ENCODE measurements at regions of chr18 and their contacts with region 1.

Region 1: DNA sequence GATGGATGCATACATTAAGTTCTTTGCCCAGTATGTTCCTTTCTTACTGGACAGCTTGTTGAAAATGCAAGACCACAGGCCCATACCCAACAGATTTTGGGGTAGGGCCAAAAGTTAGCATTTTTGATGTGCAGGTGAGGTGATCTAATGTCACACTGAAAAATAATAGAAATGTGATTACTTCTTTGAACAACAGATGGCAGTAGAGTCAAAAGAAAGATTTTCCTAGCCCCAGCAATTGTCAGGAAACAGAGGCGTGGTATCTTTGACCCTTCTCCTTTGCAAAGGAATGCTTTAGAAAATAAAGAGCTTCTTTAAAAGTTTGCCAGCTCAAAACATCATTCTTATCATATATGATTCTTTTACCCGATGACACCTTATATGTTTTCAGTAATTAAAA is 343.6 kb upstream of the SYT4 start:
- DNase-seq: peak; percentile 5
- ATAC-seq: peak; percentile 56; the same call in 2 of the 3 replicates
- H3K4me3 ChIP-seq: no peak overlapping the region
- H3K27ac ChIP-seq: no peak overlapping the region
- H3K4me1 ChIP-seq: no peaks in the 10 kb centered on the region
- H3K27me3 ChIP-seq: no peaks in the 10 kb centered on the region
- CTCF ChIP-seq: peak; percentile 63
- EP300 ChIP-seq: no peak
- POLR2A ChIP-seq: no peak
- RAD21 ChIP-seq: 0 out of 2 replicates have a peak, but pooled peaks have one; percentile 16

Region 2: GRCh38 chr18:43634994-43635393 is 14.1 kb after region 1 on chr18:
- CTCF ChIA-PET with region 1: no interaction called
- POLR2A ChIA-PET with region 1: no interaction called
- in situ Hi-C with region 1: no loop called
- intact Hi-C with region 1: no loop called
- DNase-seq: no peak
- ATAC-seq: no peak
- H3K4me3 ChIP-seq: no peak overlapping the region
- H3K27ac ChIP-seq: no peak overlapping the region
- H3K4me1 ChIP-seq: no peaks in the 10 kb centered on the region
- H3K27me3 ChIP-seq: no peaks in the 10 kb centered on the region
- CTCF ChIP-seq: no peak
- EP300 ChIP-seq: no peak
- POLR2A ChIP-seq: no peak
- RAD21 ChIP-seq: no peak

Region 3: DNA sequence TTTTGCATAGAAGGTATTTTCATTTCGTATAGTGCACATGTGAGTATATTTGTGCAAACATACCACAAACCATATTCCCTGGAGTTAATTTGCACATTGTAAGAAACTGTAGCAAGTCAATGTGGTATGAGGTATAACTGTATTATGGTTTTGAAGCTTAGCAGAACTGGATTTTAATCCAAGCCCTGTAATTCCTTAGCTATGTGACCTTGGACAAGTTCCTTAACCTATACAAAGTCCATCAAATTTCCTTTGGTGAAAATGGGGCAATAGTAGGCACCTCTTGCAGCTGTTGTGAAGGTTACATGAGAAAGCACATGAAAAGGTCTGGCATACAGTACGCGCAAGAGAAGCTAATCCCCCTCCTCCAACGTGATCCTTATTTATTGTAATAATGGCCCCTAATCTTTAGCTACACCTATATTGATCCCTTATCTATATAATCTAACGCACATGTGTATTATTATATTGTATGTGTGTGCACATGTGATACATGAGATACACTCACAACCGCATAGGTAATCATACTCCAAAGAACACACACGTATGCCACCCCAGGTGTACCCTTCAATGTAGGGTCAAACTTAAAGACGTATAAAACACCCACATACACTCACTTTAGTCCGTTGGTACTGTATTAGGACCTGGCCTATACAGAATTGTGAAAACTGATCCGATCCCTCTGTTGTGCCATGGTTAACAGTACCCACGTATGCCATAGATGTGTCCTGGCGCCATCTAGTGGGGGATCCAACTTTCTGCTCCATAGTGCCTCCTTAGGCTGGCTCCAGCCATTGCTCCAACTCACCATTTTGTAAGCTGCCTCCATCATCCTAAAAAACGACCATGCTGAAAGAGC is 1591.5 kb after region 1 on chr18:
- CTCF ChIA-PET with region 1: interaction called, 19 read pairs
- POLR2A ChIA-PET with region 1: no interaction called
- in situ Hi-C with region 1: loop called (anchors 25 kb)
- intact Hi-C with region 1: no loop called
- DNase-seq: peak; percentile 59
- ATAC-seq: peak; percentile 100
- H3K4me3 ChIP-seq: no peak overlapping the region
- H3K27ac ChIP-seq: no peak overlapping the region
- H3K4me1 ChIP-seq: no peaks in the 10 kb centered on the region
- H3K27me3 ChIP-seq: no peaks in the 10 kb centered on the region; a peak in 1 of 5 replicates
- CTCF ChIP-seq: peak; percentile 90
- EP300 ChIP-seq: no peak
- POLR2A ChIP-seq: no peak
- RAD21 ChIP-seq: peak; percentile 68

Region 4: GRCh38 chr18:45384137-45384961 is 1763.4 kb after region 1 on chr18:
- CTCF ChIA-PET with region 1: no interaction called
- POLR2A ChIA-PET with region 1: no interaction called
- in situ Hi-C with region 1: loop called (anchors 5 kb)
- intact Hi-C with region 1: loop called (anchors 5 kb)
- DNase-seq: peak; percentile 27
- ATAC-seq: peak; percentile 84
- H3K4me3 ChIP-seq: no peak overlapping the region
- H3K27ac ChIP-seq: no peak overlapping the region
- H3K4me1 ChIP-seq: no peaks in the 10 kb centered on the region
- H3K27me3 ChIP-seq: no peaks in the 10 kb centered on the region
- CTCF ChIP-seq: peak; percentile 55
- EP300 ChIP-seq: no peak
- POLR2A ChIP-seq: no peak
- RAD21 ChIP-seq: no peak

Measured in HepG2 (cell line).